Caco-2 (cell line): ENCODE measurements at regions of chr22 and their contacts with region 1.

Region 1: DNA sequence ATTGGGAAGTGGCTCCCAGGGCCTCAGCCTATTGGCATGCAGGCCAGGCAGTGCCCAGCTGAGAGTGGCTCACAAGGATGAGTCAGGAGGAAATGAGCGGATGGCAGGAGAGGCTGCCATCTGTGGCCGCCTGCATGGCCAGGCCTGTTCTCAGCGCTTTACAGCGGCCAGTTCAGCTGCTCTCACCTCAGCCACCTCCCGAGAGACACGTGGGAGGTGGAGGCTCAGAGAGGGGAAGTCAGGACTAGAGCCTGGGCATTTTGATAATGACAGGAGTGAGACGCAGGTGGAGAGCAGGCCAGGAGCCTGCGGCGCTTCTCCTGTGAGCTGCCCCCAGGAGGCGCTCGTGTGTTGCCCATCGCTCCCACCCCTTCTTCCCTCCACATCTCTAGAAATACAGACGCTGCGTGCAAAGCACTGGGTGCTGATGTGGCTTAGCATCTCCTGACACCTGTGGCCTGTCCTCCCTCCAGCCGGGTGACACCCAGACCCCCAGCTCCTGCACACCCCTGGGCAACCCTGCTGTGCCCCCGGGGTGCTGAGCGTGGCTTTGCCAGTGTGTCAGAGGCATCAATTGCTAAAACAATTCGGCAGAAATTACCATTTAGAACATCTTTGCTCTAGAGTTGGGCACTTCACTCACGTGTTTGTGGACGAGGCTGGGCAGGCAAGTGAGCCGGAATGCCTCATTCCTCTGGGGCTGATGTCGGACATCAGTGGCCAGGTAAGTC is 21.4 kb upstream of the PANX2 start:
- DNase-seq: peak in 1 of 2 experiments; percentile 65
- H3K4me3 ChIP-seq: no peak overlapping the region
- H3K4me3 Mint-ChIP-seq: no peak overlapping the region
- H3K27ac Mint-ChIP-seq: no peak overlapping the region
- H3K4me1 ChIP-seq: peaks cover 7% of the 10 kb centered on the region; the same call in 1 of the 2 replicates
- H3K4me1 Mint-ChIP-seq: peaks cover 15% of the 10 kb centered on the region
- H3K27me3 ChIP-seq: no peaks in the 10 kb centered on the region
- H3K27me3 Mint-ChIP-seq: no peaks in the 10 kb centered on the region
- CTCF ChIP-seq: peak; percentile 79 to 85

Region 2: DNA sequence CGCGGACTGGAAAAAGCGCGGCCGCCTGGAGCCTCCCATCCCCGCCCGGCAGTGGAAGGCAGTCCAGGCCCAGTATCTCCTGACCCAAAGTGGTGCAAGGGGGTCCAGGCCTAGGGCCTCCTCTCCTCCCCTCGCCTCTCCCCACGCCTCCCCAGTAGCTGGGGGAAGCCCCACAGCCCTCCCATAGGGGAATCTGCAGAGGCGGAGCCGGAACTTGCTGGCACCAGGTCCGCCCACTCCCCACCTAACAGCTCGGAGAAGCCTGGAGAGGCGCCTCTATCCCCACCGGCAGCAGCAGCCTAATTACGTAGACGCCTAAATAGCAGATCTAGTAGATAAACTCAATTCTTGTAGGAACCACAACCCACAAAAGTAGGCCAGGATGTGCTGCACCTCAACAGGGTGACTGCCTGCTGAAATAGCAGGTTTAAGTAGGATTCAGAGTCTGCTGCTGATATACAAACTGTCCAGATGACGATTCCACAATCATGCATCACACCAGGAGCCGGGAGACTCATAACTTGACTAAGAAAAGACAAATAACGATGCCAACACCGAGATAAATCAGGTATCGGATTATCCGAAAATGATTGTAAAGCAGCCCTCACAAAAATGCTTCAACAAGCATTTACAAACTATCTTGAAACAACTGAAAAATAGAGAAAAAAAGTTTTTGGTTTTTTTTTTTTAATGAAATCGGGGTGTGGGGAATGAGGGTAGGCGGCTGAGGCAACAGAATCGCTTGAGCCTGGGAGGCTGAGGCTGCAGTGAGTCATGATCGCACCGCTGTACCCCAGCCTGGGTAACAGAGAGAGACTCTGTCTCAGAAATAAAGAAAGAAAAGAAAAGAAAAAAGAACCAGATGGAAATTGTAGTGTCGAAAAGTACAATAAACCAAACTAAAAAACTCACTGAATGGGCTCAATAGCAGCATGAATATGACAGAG is 310.1 kb before region 1 on chr22:
- CTCF ChIA-PET with region 1: no interaction called
- POLR2A ChIA-PET with region 1: no interaction called
- intact Hi-C with region 1: no loop called
- DNase-seq: no peak
- H3K4me3 ChIP-seq: no peak overlapping the region
- H3K4me3 Mint-ChIP-seq: no peak overlapping the region
- H3K27ac Mint-ChIP-seq: no peak overlapping the region
- H3K4me1 ChIP-seq: peaks cover 3% of the 10 kb centered on the region; the same call in 1 of the 2 replicates
- H3K4me1 Mint-ChIP-seq: no peaks in the 10 kb centered on the region
- H3K27me3 ChIP-seq: no peaks in the 10 kb centered on the region
- H3K27me3 Mint-ChIP-seq: no peaks in the 10 kb centered on the region
- CTCF ChIP-seq: no peak

Region 3: DNA sequence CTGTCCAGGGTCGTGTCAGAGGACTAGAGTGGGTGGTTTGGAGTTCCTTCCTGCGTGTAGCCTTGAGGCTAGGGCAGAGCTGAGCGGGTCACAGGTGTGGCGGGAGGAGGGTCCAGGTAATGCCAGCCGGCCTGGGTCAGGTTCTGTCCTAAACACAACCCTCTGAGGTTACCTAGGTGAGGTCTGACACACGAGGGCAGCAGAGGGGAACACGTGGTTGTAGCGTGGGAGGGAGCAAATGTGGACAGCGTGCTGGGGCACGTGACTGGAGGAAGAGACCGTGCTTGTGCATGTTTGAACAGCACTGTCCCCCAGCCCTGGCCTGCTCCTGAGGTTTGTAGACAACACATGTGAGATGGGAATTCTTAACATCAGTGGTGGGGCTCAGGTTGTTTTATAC is 46.2 kb before region 1 on chr22:
- CTCF ChIA-PET with region 1: no interaction called
- POLR2A ChIA-PET with region 1: no interaction called
- intact Hi-C with region 1: loop called (anchors 5 kb)
- DNase-seq: peak; percentile 79 to 82
- H3K4me3 ChIP-seq: no peak overlapping the region
- H3K4me3 Mint-ChIP-seq: no peak overlapping the region
- H3K27ac Mint-ChIP-seq: peak overlapping the region; percentile 19
- H3K4me1 ChIP-seq: no peaks in the 10 kb centered on the region
- H3K4me1 Mint-ChIP-seq: peaks cover 6% of the 10 kb centered on the region
- H3K27me3 ChIP-seq: no peaks in the 10 kb centered on the region
- H3K27me3 Mint-ChIP-seq: no peaks in the 10 kb centered on the region
- CTCF ChIP-seq: peak; percentile 28 to 53

Region 4: DNA sequence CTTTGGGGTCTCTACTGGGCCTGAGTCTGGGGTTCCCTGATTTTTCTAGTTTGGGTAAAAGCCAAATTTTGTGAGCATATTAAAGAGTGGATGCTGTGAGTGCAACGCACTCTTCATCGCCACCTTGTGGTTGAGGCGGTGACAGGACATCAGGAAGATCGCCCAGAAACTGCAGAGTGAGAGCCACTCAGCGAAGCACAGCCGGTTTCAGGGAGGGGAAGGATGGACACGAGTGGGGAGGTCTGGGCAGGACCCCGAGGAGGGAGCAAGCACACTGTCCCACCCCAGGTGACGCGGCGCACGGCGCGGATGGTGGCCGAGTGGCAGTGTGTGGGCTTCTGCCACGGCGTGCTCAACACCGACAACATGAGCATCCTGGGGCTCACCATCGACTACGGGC is 60.7 kb after region 1 on chr22:
- CTCF ChIA-PET with region 1: no interaction called
- POLR2A ChIA-PET with region 1: no interaction called
- intact Hi-C with region 1: loop called (anchors 1 kb)
- DNase-seq: peak in 1 of 2 experiments; percentile 67
- H3K4me3 ChIP-seq: no peak overlapping the region
- H3K4me3 Mint-ChIP-seq: no peak overlapping the region
- H3K27ac Mint-ChIP-seq: peak overlapping the region; percentile 55
- H3K4me1 ChIP-seq: no peaks in the 10 kb centered on the region
- H3K4me1 Mint-ChIP-seq: peaks cover 10% of the 10 kb centered on the region
- H3K27me3 ChIP-seq: no peaks in the 10 kb centered on the region
- H3K27me3 Mint-ChIP-seq: no peaks in the 10 kb centered on the region
- CTCF ChIP-seq: peak; percentile 82 to 86